Sigmoid colon (tissue), 7 donors: ENCODE measurements at regions of chr20 and their contacts with region 1.

Region 1: DNA sequence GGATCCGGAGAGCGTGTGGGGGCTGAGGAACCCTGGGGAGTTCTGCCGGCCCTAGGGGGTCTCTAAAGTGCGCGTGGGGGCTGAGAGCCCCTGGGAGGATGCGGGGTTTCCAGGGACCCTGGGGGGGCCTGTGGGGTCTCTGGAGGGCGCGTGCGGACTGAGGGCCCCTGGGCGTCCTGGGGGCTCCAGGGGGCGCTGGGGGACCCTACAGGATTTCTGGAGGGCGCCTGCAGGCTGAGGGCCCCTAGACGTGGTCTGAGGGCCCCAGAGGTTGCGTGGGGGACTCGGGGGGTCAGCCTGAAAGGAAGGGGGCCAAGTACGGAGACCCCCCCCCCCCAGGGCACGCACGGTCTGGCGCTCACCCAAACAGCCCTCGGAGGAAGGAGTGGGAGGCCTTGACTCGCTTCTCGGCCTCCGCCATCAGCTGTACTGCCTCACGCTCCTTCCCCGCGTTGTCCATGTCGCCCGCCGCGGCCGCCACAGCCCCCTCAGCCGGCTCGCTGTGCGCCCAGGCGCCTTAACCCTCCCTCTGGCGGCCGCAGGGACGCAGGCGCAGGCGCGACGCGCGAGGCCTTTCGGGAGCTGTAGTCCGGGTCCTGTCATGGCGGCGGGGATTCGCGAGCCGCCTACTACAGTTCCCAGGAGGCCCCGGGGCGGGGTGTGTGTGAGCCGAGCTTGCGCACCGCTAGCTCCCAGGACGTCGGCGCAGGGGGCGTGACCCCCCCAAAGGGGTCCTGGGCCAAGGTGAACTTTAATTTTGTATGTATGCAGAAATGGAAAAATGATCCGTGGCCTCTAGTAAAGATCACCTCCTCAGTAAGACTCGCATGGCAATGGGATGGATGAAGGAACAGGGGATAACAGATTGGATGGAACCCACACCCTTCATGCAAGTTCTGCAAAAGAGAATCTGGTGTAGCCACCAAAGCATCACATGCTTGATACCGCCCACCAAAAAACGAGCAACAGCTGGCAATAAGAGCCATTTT is at the start of gene NAPB:
- DNase-seq: peak; percentile 96
- H3K4me3 ChIP-seq: peak within 1 kb of the TSS; percentile 95 to 98 (median 97)
- H3K27ac ChIP-seq: peak within 1 kb of the TSS; percentile 92 to 94 (median 92)
- H3K4me1 ChIP-seq: peaks cover 0 to 37% (median 24%) of the 10 kb centered on the region in 4 donors
- H3K27me3 ChIP-seq: no peaks in the 10 kb centered on the region
- CTCF ChIP-seq: peak; percentile 53 to 69 (median 58)
- EP300 ChIP-seq: no peak
- POLR2A ChIP-seq: peak; percentile 63 to 81
- total RNA-seq, gene NAPB: 14.4 to 22.9 (median 20.9) TPM

Region 2: DNA sequence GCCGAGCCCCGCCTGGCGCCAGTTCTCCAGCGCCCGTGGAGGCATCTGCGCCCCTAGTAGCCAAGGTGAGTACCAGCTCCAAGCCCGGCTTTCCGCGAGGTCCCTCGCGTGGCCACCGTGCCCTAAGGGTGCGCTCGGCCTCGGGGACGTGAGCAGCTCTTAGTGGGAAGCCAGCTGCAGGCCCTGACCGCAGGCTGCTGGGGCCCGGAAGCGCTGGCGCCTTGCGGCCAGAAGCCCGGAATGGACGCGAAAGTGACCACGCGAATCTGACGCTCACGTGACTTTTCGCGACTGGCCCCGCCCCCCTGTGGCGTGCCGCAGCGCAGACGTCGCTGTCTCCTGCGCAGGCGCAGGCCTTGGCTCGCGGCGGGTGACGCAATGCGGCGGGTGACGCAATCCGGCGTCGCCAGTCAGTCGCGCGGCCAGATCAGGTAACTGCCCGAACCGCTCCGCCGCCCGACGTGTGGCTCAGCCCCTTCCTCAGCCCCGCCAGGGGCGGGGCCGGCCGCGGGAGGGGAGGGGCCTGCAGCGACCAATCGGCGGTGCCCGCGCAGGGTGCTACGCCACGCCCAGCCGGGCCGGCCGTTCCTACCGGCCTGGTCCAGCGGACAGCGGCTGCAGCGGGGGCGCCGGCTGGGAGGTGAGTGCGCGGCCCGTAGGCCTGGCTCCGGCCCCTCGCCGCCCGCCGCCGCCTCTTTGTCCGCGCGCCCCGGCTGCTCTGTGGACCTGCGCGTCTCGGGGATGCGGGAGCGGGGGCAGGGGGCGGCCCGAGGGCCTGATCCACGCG is 59.4 kb before region 1 on chr20 and contains the start of gene GZF1:
- intact Hi-C with region 1: loop called (anchors 1 kb)
- DNase-seq: peak; percentile 99
- H3K4me3 ChIP-seq: peak within 1 kb of the TSS; percentile 67 to 95 (median 83)
- H3K27ac ChIP-seq: peak within 1 kb of the TSS; percentile 97 to 100 (median 99)
- H3K4me1 ChIP-seq: peaks cover 0 to 55% (median 49%) of the 10 kb centered on the region in 4 donors
- H3K27me3 ChIP-seq: no peaks in the 10 kb centered on the region
- CTCF ChIP-seq: no peak
- EP300 ChIP-seq: peak in 2 of 4 donors; percentile 71 to 100
- POLR2A ChIP-seq: peak; percentile 97 to 98
- total RNA-seq, gene GZF1: 13.0 to 17.5 (median 17.1) TPM